ENCODE measurements at regions of chr1 and their contacts with region 1.

Region 1: GRCh38 chr1:210373885-210374599 is 45.3 kb downstream of the HHAT start:
- DNase-seq: peak; percentile 74
- ATAC-seq: peak; percentile 69
- H3K4me3 Mint-ChIP-seq: no peak overlapping the region
- H3K27ac Mint-ChIP-seq: peak overlapping the region; percentile 27
- H3K4me1 Mint-ChIP-seq: peaks cover 6% of the 10 kb centered on the region
- H3K27me3 Mint-ChIP-seq: no peaks in the 10 kb centered on the region

Region 2: GRCh38 chr1:210332719-210333398 is 41.2 kb before region 1 on chr1:
- CTCF ChIA-PET with region 1: interaction called, 10 read pairs
- POLR2A ChIA-PET with region 1: interaction called, 26 read pairs
- DNase-seq: peak; percentile 81
- ATAC-seq: peak; percentile 34
- H3K4me3 Mint-ChIP-seq: peak overlapping the region; percentile 29
- H3K27ac Mint-ChIP-seq: peak overlapping the region; percentile 65
- H3K4me1 Mint-ChIP-seq: peaks cover 42% of the 10 kb centered on the region
- H3K27me3 Mint-ChIP-seq: no peaks in the 10 kb centered on the region

Region 3: GRCh38 chr1:210342986-210343780 is 30.9 kb before region 1 on chr1:
- CTCF ChIA-PET with region 1: interaction called, 27 read pairs
- POLR2A ChIA-PET with region 1: interaction called, 12 read pairs
- DNase-seq: no peak
- ATAC-seq: no peak
- H3K4me3 Mint-ChIP-seq: no peak overlapping the region
- H3K27ac Mint-ChIP-seq: no peak overlapping the region
- H3K4me1 Mint-ChIP-seq: peaks cover 33% of the 10 kb centered on the region
- H3K27me3 Mint-ChIP-seq: no peaks in the 10 kb centered on the region

Region 4: GRCh38 chr1:210360852-210361477 is 13.1 kb before region 1 on chr1:
- CTCF ChIA-PET with region 1: interaction called, 61 read pairs
- POLR2A ChIA-PET with region 1: interaction called, 7 read pairs
- DNase-seq: no peak
- ATAC-seq: peak; percentile 69
- H3K4me3 Mint-ChIP-seq: no peak overlapping the region
- H3K27ac Mint-ChIP-seq: no peak overlapping the region
- H3K4me1 Mint-ChIP-seq: no peaks in the 10 kb centered on the region
- H3K27me3 Mint-ChIP-seq: peaks cover 7% of the 10 kb centered on the region

Region 5: DNA sequence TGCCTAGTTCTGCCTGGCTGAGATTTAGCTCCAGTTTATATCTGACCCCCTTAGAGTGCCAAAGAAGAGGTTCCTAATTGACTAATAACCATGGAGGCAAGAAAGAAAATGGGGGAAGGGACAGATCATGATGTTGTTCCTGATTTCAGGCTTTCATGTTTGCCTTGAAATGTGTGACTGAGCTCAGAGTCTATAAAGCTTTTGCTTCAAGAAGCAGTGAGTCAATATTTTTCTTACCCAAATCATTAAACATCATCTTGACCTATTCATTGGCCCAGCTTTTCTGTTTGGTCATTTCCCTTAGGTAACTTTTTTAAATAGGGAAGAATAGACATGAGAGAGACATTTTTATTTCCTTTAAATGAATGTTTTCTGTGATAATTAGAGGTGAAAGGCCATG is 10.6 kb after region 1 on chr1:
- CTCF ChIA-PET with region 1: interaction called, 11 read pairs
- POLR2A ChIA-PET with region 1: interaction called, 5 read pairs
- DNase-seq: no peak
- ATAC-seq: no peak
- H3K4me3 Mint-ChIP-seq: no peak overlapping the region
- H3K27ac Mint-ChIP-seq: no peak overlapping the region
- H3K4me1 Mint-ChIP-seq: no peaks in the 10 kb centered on the region
- H3K27me3 Mint-ChIP-seq: no peaks in the 10 kb centered on the region

Region 6: DNA sequence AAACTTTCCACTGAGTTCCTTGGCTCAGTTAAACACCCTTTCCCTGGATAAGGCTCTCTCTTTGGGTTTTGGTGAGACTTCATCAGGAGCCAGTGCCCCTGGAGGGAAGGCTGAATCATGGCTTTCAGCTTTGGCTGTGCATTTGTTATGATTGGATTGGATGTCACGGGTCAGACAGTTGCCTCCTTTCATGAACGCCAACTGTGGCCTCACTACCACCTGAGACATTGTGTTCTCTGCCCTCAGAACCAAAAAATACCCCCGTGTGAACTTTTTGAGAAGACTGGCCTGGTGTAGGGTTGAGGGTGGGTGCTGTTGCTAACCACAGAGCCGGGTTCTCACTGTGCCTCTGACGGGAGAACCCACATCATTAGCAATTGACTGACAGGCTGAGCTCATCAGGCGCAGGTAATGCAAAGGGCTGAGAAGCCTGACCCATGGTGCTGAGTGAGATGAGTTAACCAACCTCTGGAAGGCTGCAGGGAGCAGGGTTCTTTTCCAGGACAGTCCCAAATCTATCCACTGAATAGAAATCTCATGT is 20.3 kb after region 1 on chr1:
- CTCF ChIA-PET with region 1: interaction called, 51 read pairs
- POLR2A ChIA-PET with region 1: interaction called, 20 read pairs
- DNase-seq: peak; percentile 23
- ATAC-seq: no peak
- H3K4me3 Mint-ChIP-seq: no peak overlapping the region
- H3K27ac Mint-ChIP-seq: no peak overlapping the region
- H3K4me1 Mint-ChIP-seq: peaks cover 14% of the 10 kb centered on the region
- H3K27me3 Mint-ChIP-seq: peaks cover 11% of the 10 kb centered on the region

Measured in activated CD8-positive, alpha-beta T cell treated with anti-CD3 and anti-CD28 coated beads, Interleukin-2, amount 10 ng/mL, durations not matched to agents 7 days and 5 days (primary cell).